Mammary epithelial cell (primary cell): ENCODE measurements at regions of chr12 and their contacts with region 1.

Region 1: DNA sequence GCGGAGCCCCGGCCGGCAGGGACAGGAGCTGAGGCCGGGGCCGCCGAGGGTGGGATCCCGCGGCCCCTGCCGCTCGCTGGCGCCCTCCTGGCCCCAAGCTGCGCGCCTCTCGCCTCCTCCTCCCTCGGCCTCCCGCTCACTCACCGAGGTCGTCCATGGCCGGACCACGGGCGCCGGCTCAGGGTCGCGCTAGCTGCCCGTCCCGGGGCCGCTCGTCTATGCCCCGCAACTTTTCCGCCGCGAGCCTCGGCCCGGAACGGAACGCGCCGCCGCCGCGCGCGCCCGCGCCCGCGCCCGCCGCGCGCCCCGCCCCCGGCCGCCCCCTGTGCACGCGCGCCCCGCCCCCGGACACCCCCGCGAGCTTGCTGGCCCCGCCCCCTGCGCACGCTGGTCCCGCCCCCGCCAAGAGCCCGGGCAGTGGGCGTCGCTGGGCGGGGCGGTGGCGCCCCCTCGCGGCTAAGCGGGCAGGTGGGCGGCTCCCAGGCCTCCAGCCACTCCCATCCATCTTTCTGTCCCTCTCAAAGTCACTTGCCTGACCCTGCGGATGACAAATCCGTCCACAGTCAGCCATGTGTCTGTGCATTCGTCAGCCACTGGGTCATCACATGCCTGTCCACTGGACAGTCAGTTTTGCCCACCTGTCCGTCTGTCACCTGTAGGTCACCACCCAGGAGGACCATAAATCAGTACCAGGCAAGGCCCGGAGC is at the start of gene PXN:
- DNase-seq: peak; percentile 63
- H3K4me3 ChIP-seq: peak within 1 kb of the TSS; percentile 58 to 85 (median 66)
- H3K27ac ChIP-seq: peak within 1 kb of the TSS; percentile 89
- H3K4me1 ChIP-seq: peaks cover 27% of the 10 kb centered on the region
- H3K27me3 ChIP-seq: no peaks in the 10 kb centered on the region
- CTCF ChIP-seq: peak; percentile 45 to 75
- total RNA-seq, gene PXN: 155 to 477 TPM

Region 2: GRCh38 chr12:119938049-119938667 is 327.5 kb before region 1 on chr12:
- CTCF ChIA-PET with region 1: no interaction called
- dilution Hi-C with region 1: no loop called
- in situ Hi-C with region 1: no loop called
- intact Hi-C with region 1: loop called (anchors 5 kb)
- DNase-seq: peak; percentile 27
- H3K4me3 ChIP-seq: no peak overlapping the region
- H3K27ac ChIP-seq: no peak overlapping the region
- H3K4me1 ChIP-seq: peaks cover 7% of the 10 kb centered on the region
- H3K27me3 ChIP-seq: no peaks in the 10 kb centered on the region
- CTCF ChIP-seq: peak; percentile 80 to 94

Region 3: GRCh38 chr12:120167529-120168095 is 98.0 kb before region 1 on chr12:
- CTCF ChIA-PET with region 1: interaction called, 19 read pairs
- dilution Hi-C with region 1: loop called (anchors 10 kb)
- in situ Hi-C with region 1: no loop called
- intact Hi-C with region 1: no loop called
- DNase-seq: no peak
- H3K4me3 ChIP-seq: no peak overlapping the region
- H3K27ac ChIP-seq: no peak overlapping the region
- H3K4me1 ChIP-seq: no peaks in the 10 kb centered on the region
- H3K27me3 ChIP-seq: no peaks in the 10 kb centered on the region
- CTCF ChIP-seq: no peak

Region 4: DNA sequence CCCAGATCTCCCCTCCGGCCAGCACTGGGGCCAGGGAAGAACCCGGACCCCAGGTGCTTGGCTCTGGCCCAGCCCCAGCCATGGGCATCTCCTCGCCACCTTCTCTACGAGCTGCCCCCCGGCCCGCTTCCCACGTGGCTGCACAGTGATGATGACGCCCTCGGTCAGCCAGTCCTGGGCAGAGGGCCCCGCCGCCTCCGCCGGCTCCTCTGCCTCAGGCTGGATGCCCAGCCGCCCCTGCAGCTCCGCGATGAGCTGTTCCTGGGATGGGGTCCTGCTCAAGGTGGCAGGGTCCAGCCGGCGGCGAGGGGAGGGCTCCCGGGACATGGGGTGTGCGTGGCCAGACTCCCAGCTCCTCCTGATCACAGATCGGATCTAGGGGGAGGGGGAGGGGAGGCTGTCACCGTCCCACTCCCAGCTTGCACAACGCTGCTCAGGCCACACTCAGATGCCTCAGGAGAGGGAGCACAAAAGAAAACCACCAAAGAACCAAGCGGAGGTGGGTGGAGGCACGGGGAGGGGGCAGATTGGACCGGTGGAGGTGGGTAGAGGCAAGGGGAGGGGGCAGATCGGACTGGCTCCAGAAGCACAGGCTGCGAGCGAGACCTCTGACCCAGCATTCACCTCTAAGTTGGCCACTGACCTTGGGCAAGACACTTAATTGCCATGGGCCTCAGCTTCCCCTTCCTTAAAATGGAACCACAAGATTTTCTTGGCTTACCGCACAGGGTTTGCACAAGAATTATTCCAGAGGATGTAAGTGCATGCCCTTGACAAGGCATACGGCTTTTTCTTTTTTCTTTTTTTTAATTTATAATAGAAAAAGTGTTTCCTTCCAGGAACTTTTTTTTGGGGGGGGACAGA is 48.7 kb before region 1 on chr12:
- CTCF ChIA-PET with region 1: no interaction called
- dilution Hi-C with region 1: no loop called
- in situ Hi-C with region 1: loop called in 1 of 2 experiments (anchors 10 kb)
- intact Hi-C with region 1: no loop called
- DNase-seq: no peak
- H3K4me3 ChIP-seq: no peak overlapping the region
- H3K27ac ChIP-seq: no peak overlapping the region
- H3K4me1 ChIP-seq: no peaks in the 10 kb centered on the region
- H3K27me3 ChIP-seq: no peaks in the 10 kb centered on the region
- CTCF ChIP-seq: no peak

Region 5: GRCh38 chr12:120234643-120235368 is 30.8 kb before region 1 on chr12:
- CTCF ChIA-PET with region 1: interaction called, 7 read pairs
- dilution Hi-C with region 1: no loop called
- in situ Hi-C with region 1: loop called in 1 of 2 experiments (anchors 5 kb)
- intact Hi-C with region 1: loop called (anchors 1 kb)
- DNase-seq: peak; percentile 86
- H3K4me3 ChIP-seq: no peak overlapping the region
- H3K27ac ChIP-seq: peak overlapping the region; percentile 60
- H3K4me1 ChIP-seq: peaks cover 93% of the 10 kb centered on the region
- H3K27me3 ChIP-seq: no peaks in the 10 kb centered on the region
- CTCF ChIP-seq: peak; percentile 35 to 61

Region 6: GRCh38 chr12:120292661-120293531 is 27.3 kb after region 1 on chr12 and contains the start of gene RNU4-1:
- CTCF ChIA-PET with region 1: no interaction called
- dilution Hi-C with region 1: no loop called
- in situ Hi-C with region 1: no loop called
- intact Hi-C with region 1: loop called (anchors 1 kb)
- DNase-seq: peak; percentile 99
- H3K4me3 ChIP-seq: peak within 1 kb of the TSS; percentile 11 to 51 (median 16)
- H3K27ac ChIP-seq: peak within 1 kb of the TSS; percentile 100
- H3K4me1 ChIP-seq: peaks cover 4% of the 10 kb centered on the region
- H3K27me3 ChIP-seq: no peaks in the 10 kb centered on the region
- CTCF ChIP-seq: no peak
- total RNA-seq, gene RNU4-1: under 0.01 to 1,952 TPM